ENCODE measurements at regions of chr7 and their contacts with region 1.

Region 1: GRCh38 chr7:148142660-148143248 is 447.8 kb upstream of the C7orf33 start:
- DNase-seq: peak in 1 of 2 experiments; percentile 49
- H3K4me3 ChIP-seq: no peak overlapping the region
- H3K4me3 Mint-ChIP-seq: no peak overlapping the region
- H3K27ac Mint-ChIP-seq: no peak overlapping the region
- H3K4me1 ChIP-seq: no peaks in the 10 kb centered on the region
- H3K4me1 Mint-ChIP-seq: no peaks in the 10 kb centered on the region
- H3K27me3 ChIP-seq: no peaks in the 10 kb centered on the region
- H3K27me3 Mint-ChIP-seq: peaks cover 6% of the 10 kb centered on the region
- CTCF ChIP-seq: peak; percentile 68 to 69

Region 2: DNA sequence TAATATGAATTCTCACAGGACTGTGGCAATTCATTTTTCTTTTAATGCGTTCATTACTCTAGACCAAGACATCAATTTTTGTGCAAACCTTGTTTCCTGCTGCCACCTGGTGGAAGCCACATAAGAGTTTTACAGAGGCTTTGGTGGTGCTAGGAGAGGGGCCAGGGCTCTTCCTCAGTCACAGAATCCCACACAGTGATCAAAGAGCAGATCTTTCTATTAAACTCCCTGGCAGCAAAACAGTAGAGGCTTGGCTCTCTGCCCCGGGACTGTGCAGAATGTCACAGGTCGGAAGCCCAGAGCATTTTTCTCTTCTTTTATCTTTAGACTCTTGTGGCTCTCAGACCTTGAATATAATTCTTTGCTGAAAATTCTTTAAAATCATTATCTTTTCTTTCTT is 58.6 kb before region 1 on chr7:
- CTCF ChIA-PET with region 1: no interaction called
- POLR2A ChIA-PET with region 1: no interaction called
- intact Hi-C with region 1: loop called (anchors 1 kb)
- DNase-seq: peak; percentile 62 to 64
- H3K4me3 ChIP-seq: no peak overlapping the region
- H3K4me3 Mint-ChIP-seq: no peak overlapping the region
- H3K27ac Mint-ChIP-seq: no peak overlapping the region
- H3K4me1 ChIP-seq: peaks cover 4% of the 10 kb centered on the region; the same call in 1 of the 2 replicates
- H3K4me1 Mint-ChIP-seq: no peaks in the 10 kb centered on the region
- H3K27me3 ChIP-seq: no peaks in the 10 kb centered on the region
- H3K27me3 Mint-ChIP-seq: peaks cover 6% of the 10 kb centered on the region
- CTCF ChIP-seq: peak; percentile 74 to 79

Region 3: GRCh38 chr7:148110111-148110868 is 32.5 kb before region 1 on chr7:
- CTCF ChIA-PET with region 1: interaction called, 6 read pairs
- POLR2A ChIA-PET with region 1: no interaction called
- intact Hi-C with region 1: loop called (anchors 1 kb)
- DNase-seq: peak; percentile 61 to 75
- H3K4me3 ChIP-seq: no peak overlapping the region
- H3K4me3 Mint-ChIP-seq: no peak overlapping the region
- H3K27ac Mint-ChIP-seq: no peak overlapping the region
- H3K4me1 ChIP-seq: peaks cover 14% of the 10 kb centered on the region; the same call in 1 of the 2 replicates
- H3K4me1 Mint-ChIP-seq: no peaks in the 10 kb centered on the region
- H3K27me3 ChIP-seq: no peaks in the 10 kb centered on the region
- H3K27me3 Mint-ChIP-seq: no peaks in the 10 kb centered on the region
- CTCF ChIP-seq: peak; percentile 51 to 56

Region 4: GRCh38 chr7:148242294-148242801 is 99.6 kb after region 1 on chr7:
- CTCF ChIA-PET with region 1: interaction called, 4 read pairs
- POLR2A ChIA-PET with region 1: no interaction called
- intact Hi-C with region 1: loop called (anchors 1 kb)
- DNase-seq: peak; percentile 55 to 68
- H3K4me3 ChIP-seq: no peak overlapping the region
- H3K4me3 Mint-ChIP-seq: peak overlapping the region; percentile 43
- H3K27ac Mint-ChIP-seq: no peak overlapping the region
- H3K4me1 ChIP-seq: peaks cover 21% of the 10 kb centered on the region
- H3K4me1 Mint-ChIP-seq: peaks cover 16% of the 10 kb centered on the region
- H3K27me3 ChIP-seq: no peaks in the 10 kb centered on the region
- H3K27me3 Mint-ChIP-seq: no peaks in the 10 kb centered on the region
- CTCF ChIP-seq: peak; percentile 76 to 91

Measured in Caco-2 (cell line).